ENCODE measurements at regions of chr3 and their contacts with region 1.

Region 1: DNA sequence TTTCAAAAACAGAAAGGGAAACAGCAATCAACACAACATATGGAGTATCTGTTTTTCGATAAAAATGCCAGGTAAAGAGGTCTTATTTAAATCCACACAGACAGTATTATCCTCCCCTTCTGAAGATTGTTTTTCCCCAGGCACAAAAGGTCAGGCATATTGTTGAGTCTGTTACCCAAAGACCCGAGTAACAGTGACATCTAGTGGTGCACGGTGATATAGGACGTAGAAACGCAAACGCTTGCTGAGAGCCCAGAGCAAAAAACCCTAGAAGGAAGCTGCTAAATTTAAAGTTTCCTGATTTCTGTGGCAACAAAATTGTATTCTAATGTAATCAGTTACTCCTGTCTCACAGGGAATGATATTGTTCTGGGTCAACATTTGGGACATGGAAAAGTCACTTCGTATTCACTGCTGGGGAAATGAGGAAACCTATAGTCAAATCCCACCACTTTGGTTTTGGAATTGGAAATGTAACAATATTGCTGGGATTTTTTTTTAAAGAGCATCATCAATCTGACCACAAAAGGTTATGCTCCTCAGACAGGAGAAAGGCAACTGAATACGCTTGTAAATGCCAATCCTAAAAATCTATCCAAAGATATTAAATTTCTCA is 312.7 kb upstream of the CCDC54 start:
- DNase-seq: peak; percentile 76
- ATAC-seq: peak; percentile 82
- H3K4me3 Mint-ChIP-seq: no peak overlapping the region
- H3K27ac Mint-ChIP-seq: no peak overlapping the region
- H3K4me1 Mint-ChIP-seq: peaks cover 36% of the 10 kb centered on the region
- H3K27me3 Mint-ChIP-seq: no peaks in the 10 kb centered on the region
- CTCF ChIP-seq: peak; percentile 75

Region 2: DNA sequence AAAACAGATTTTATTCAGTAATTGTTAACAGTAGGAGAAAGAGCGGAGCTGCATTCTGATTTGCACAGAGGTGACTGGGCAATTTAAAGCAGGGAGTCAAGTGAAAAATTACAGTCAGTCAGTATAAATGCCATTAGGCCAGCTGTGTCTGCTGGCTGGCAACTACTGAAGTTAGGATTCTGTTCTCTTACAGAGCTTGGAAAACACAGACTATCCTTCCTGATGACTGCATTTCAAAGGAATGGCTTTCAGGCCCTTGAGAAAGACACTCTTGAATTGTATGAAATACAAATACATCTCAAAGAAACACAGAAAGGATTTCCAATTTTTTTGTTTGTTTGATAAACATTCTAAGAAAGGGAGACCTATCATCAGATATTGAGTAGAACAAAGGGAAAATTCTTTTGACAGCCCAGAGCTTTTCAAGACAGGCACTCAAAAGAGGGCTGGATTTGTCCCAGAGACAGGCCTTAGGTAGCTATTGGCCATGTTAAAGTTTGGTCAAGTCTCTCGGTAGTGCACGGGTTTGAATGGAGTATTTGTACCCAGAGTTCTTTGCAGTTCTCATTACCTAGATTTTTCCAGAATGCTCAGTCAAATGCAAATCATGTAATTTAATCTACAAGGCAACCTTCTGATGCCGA is 238.5 kb before region 1 on chr3:
- CTCF ChIA-PET with region 1: interaction called, 20 read pairs
- POLR2A ChIA-PET with region 1: no interaction called
- DNase-seq: no peak
- ATAC-seq: no peak
- H3K4me3 Mint-ChIP-seq: no peak overlapping the region
- H3K27ac Mint-ChIP-seq: peak overlapping the region; percentile 88
- H3K4me1 Mint-ChIP-seq: peaks cover 70% of the 10 kb centered on the region
- H3K27me3 Mint-ChIP-seq: peaks cover 40% of the 10 kb centered on the region
- CTCF ChIP-seq: no peak